Activated CD8-positive, alpha-beta T cell treated with anti-CD3 and anti-CD28 coated beads for 36 hours (primary cell): ENCODE measurements at regions of chr6 and their contacts with region 1.

Region 1: DNA sequence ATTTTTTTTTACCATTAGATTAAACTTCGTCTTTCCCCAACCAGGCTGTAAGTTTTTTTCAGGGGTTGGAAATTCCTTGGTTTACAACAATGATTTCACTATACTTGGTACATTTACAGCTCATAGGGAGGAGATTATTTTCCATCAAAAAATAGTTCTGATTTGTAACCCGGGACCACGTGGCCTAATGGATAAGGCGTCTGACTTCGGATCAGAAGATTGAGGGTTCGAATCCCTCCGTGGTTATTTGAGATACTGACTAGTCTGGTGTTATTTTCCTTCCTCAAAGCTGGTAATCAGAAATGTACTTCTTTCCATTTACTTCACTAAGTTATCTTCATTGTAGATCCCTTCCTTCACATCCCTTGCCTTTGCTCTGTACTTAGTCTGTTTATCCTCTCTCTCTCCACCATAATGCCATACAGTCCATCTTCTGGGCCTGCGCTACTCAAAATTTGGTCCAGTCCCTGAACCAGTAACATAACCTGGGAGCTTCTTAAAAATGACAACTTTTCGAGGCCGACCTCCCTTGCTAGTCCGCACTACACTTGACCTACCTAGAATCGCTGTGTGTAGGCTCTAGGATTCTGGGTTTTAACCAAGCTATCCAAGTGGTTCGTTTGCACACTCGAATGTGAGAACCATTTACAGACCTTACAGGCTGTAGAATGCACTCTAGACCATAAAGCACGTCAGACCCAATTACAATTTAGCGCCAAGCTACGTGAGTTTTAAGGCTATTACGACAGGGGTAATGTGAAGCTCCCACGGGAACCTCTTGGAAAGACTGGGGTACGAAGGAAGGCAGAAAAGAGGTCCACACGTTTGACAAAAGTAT is 42.1 kb upstream of the BTN3A2 start:
- DNase-seq: peak; percentile 79
- ATAC-seq: peak; percentile 65
- H3K4me3 Mint-ChIP-seq: peak overlapping the region; percentile 85
- H3K27ac Mint-ChIP-seq: peak overlapping the region; percentile 94
- H3K4me1 Mint-ChIP-seq: peaks cover 22% of the 10 kb centered on the region
- H3K27me3 Mint-ChIP-seq: peaks cover 8% of the 10 kb centered on the region
- CTCF ChIP-seq: no peak

Region 2: DNA sequence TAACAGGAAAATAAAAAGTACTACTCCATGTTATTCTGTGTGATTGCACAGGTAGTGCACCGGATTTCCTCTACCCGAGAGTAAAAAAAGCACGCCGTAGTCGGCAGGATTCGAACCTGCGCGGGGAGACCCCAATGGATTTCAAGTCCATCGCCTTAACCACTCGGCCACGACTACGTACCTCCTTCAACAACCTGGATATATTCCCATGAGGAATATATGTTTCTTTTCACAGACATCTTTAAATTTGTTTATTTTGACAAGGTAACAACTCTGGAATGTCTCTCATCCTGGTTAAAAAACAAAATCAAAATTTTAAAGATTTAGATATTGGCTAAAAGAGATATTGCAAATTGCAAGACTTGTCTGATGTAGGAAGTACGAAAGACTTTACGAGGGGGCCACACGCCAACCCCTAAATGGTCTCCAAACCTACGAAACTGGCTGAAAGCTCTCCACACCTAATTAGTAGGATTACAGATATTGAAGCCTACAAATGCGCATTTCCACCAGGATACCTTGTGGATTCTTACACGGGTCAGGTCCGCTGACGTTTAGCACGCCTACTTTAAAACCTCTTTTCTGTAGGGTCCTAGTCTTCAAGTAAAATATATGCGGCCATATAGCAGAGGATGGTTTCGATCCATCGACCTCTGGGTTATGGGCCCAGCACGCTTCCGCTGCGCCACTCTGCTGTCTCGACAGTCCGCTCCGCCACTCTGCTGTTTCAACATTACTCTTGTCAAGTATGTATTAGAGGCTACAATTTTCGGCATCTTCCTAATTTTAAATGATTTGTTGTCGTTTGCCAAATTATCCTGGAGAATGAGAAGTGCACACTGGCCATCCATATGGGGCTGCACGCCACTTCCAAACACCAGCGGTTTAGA is 10.1 kb before region 1 on chr6:
- CTCF ChIA-PET with region 1: interaction called, 10 read pairs
- POLR2A ChIA-PET with region 1: interaction called, 9 read pairs
- intact Hi-C with region 1: no loop called
- DNase-seq: peak; percentile 92
- ATAC-seq: peak; percentile 74
- H3K4me3 Mint-ChIP-seq: peak overlapping the region; percentile 84
- H3K27ac Mint-ChIP-seq: peak overlapping the region; percentile 93
- H3K4me1 Mint-ChIP-seq: peaks cover 33% of the 10 kb centered on the region
- H3K27me3 Mint-ChIP-seq: no peaks in the 10 kb centered on the region
- CTCF ChIP-seq: no peak

Region 3: GRCh38 chr6:26336355-26337198 is 13.7 kb after region 1 on chr6:
- CTCF ChIA-PET with region 1: interaction called, 31 read pairs
- POLR2A ChIA-PET with region 1: interaction called, 6 read pairs
- intact Hi-C with region 1: no loop called
- DNase-seq: no peak
- ATAC-seq: peak; percentile 24
- H3K4me3 Mint-ChIP-seq: no peak overlapping the region
- H3K27ac Mint-ChIP-seq: no peak overlapping the region
- H3K4me1 Mint-ChIP-seq: peaks cover 23% of the 10 kb centered on the region
- H3K27me3 Mint-ChIP-seq: peaks cover 6% of the 10 kb centered on the region
- CTCF ChIP-seq: no peak

Region 4: GRCh38 chr6:26478985-26479278 is 156.1 kb after region 1 on chr6:
- CTCF ChIA-PET with region 1: no interaction called
- POLR2A ChIA-PET with region 1: no interaction called
- intact Hi-C with region 1: no loop called
- DNase-seq: no peak
- ATAC-seq: no peak
- H3K4me3 Mint-ChIP-seq: no peak overlapping the region
- H3K27ac Mint-ChIP-seq: no peak overlapping the region
- H3K4me1 Mint-ChIP-seq: peaks cover 25% of the 10 kb centered on the region
- H3K27me3 Mint-ChIP-seq: no peaks in the 10 kb centered on the region
- CTCF ChIP-seq: no peak